WTC11 (cell line): ENCODE measurements at regions of chr9 and their contacts with region 1.

Region 1: GRCh38 chr9:72871685-72872084 is 81.2 kb downstream of the ALDH1A1 start:
- DNase-seq: no peak
- ATAC-seq: no peak
- H3K4me3 Mint-ChIP-seq: no peak overlapping the region
- H3K27ac Mint-ChIP-seq: no peak overlapping the region
- H3K4me1 Mint-ChIP-seq: peaks cover 7% of the 10 kb centered on the region
- H3K27me3 Mint-ChIP-seq: no peaks in the 10 kb centered on the region
- CTCF ChIP-seq: 0 out of 2 replicates have a peak, but pooled peaks have one; percentile 16

Region 2: GRCh38 chr9:72807765-72808445 is 63.8 kb before region 1 on chr9:
- CTCF ChIA-PET with region 1: no interaction called
- POLR2A ChIA-PET with region 1: no interaction called
- DNase-seq: peak; percentile 35
- ATAC-seq: peak; percentile 65
- H3K4me3 Mint-ChIP-seq: no peak overlapping the region
- H3K27ac Mint-ChIP-seq: no peak overlapping the region
- H3K4me1 Mint-ChIP-seq: no peaks in the 10 kb centered on the region
- H3K27me3 Mint-ChIP-seq: no peaks in the 10 kb centered on the region
- CTCF ChIP-seq: peak; percentile 39; the same call in 1 of the 2 replicates

Region 3: DNA sequence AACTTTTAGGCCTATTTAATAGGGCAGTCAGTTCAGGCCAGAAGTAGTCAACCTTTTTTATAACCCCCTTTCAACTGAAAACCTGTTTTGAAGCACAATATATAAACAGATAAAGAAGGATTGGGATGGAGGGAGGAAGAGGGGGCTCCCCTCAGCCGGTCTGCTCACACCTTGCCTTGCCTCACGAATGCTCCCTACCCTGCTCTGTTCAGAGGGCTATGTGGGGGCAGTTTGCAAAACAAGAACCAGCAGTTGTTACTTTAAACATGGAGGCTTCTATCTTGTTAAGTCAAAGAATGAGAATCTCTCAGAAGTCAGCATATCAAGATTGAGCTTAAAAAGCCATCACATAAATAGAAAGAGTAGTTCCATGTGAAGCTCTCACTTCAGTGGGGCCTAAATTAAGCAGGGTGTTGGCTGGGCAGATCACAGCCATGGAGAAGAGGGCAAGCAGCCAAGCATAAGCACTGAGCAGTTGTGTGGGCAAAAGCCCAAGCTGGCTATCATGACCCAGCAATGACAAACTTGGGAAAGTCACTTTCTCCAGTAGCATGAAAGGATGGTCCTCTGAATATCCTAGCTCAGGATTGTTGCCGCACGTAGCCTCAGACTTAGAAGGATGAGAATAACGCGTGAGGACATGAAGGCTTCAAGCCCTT is 10.6 kb after region 1 on chr9:
- CTCF ChIA-PET with region 1: no interaction called
- POLR2A ChIA-PET with region 1: no interaction called
- DNase-seq: no peak
- ATAC-seq: no peak
- H3K4me3 Mint-ChIP-seq: no peak overlapping the region
- H3K27ac Mint-ChIP-seq: no peak overlapping the region
- H3K4me1 Mint-ChIP-seq: no peaks in the 10 kb centered on the region
- H3K27me3 Mint-ChIP-seq: no peaks in the 10 kb centered on the region
- CTCF ChIP-seq: no peak

Region 4: GRCh38 chr9:72917892-72918509 is 46.3 kb after region 1 on chr9:
- CTCF ChIA-PET with region 1: no interaction called
- POLR2A ChIA-PET with region 1: no interaction called
- DNase-seq: no peak
- ATAC-seq: no peak
- H3K4me3 Mint-ChIP-seq: no peak overlapping the region
- H3K27ac Mint-ChIP-seq: no peak overlapping the region
- H3K4me1 Mint-ChIP-seq: peaks cover 10% of the 10 kb centered on the region; the same call in 1 of the 2 replicates
- H3K27me3 Mint-ChIP-seq: no peaks in the 10 kb centered on the region
- CTCF ChIP-seq: no peak

Region 5: GRCh38 chr9:72931437-72931836 is 59.8 kb after region 1 on chr9:
- CTCF ChIA-PET with region 1: interaction called, 18 read pairs
- POLR2A ChIA-PET with region 1: no interaction called
- DNase-seq: no peak
- ATAC-seq: no peak
- H3K4me3 Mint-ChIP-seq: no peak overlapping the region
- H3K27ac Mint-ChIP-seq: no peak overlapping the region
- H3K4me1 Mint-ChIP-seq: peaks cover 4% of the 10 kb centered on the region; the same call in 1 of the 2 replicates
- H3K27me3 Mint-ChIP-seq: no peaks in the 10 kb centered on the region
- CTCF ChIP-seq: no peak

Region 6: GRCh38 chr9:73079326-73079725 is 207.6 kb after region 1 on chr9:
- CTCF ChIA-PET with region 1: interaction called, 14 read pairs
- POLR2A ChIA-PET with region 1: no interaction called
- DNase-seq: no peak
- ATAC-seq: peak; percentile 43; the same call in 1 of the 2 replicates
- H3K4me3 Mint-ChIP-seq: no peak overlapping the region
- H3K27ac Mint-ChIP-seq: no peak overlapping the region; the same call in 1 of the 2 replicates
- H3K4me1 Mint-ChIP-seq: peaks cover 33% of the 10 kb centered on the region
- H3K27me3 Mint-ChIP-seq: no peaks in the 10 kb centered on the region
- CTCF ChIP-seq: no peak